ENCODE measurements at regions of chr15 and their contacts with region 1.

Region 1: DNA sequence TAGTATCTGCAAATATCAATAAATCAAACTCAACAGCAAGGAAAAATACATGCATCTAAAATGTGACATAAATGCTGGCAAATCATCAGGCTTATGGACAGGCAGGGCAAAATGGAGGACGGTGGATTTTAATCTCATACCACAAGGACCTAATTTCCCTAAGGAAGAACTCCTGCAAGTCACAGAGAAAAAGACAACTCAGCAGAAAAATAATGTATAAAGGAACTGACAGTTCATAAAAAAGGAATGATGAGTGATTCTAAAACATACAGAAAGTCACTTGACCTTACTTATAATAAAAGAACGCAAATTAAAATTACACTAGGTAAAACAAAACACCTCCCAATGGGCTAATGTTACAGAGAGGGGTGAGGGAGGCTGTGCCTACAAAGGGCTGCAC is 17.2 kb downstream of the TUBGCP5 start:
- DNase-seq: no peak
- H3K4me3 ChIP-seq: no peak overlapping the region
- H3K4me3 Mint-ChIP-seq: no peak overlapping the region
- H3K27ac ChIP-seq: no peak overlapping the region
- H3K27ac Mint-ChIP-seq: no peak overlapping the region
- H3K4me1 ChIP-seq: no peaks in the 10 kb centered on the region
- H3K4me1 Mint-ChIP-seq: no peaks in the 10 kb centered on the region
- H3K27me3 ChIP-seq: no peaks in the 10 kb centered on the region
- H3K27me3 Mint-ChIP-seq: no peaks in the 10 kb centered on the region

Region 2: GRCh38 chr15:23039151-23039916 is 17.2 kb after region 1 on chr15 and contains the start of gene TUBGCP5:
- CTCF ChIA-PET with region 1: interaction called, 22 read pairs
- POLR2A ChIA-PET with region 1: interaction called, 3 read pairs
- intact Hi-C with region 1: no loop called
- DNase-seq: peak; percentile 96 to 98 (median 97)
- H3K4me3 ChIP-seq: peak within 1 kb of the TSS; percentile 65 to 83
- H3K4me3 Mint-ChIP-seq: peak within 1 kb of the TSS; percentile 90 to 100 (median 96)
- H3K27ac ChIP-seq: peak within 1 kb of the TSS; percentile 23
- H3K27ac Mint-ChIP-seq: peak within 1 kb of the TSS; percentile 88 to 99 (median 91)
- H3K4me1 ChIP-seq: peaks cover 19% of the 10 kb centered on the region
- H3K4me1 Mint-ChIP-seq: peaks cover 11 to 35% (median 21%) of the 10 kb centered on the region in 4 donors
- H3K27me3 ChIP-seq: no peaks in the 10 kb centered on the region
- H3K27me3 Mint-ChIP-seq: peaks cover 0 to 1% of the 10 kb centered on the region in 2 donors
- total RNA-seq, gene TUBGCP5: 26.0 to 28.3 TPM

Region 3: GRCh38 chr15:23049984-23050628 is 27.9 kb after region 1 on chr15:
- CTCF ChIA-PET with region 1: no interaction called
- POLR2A ChIA-PET with region 1: no interaction called
- intact Hi-C with region 1: no loop called
- DNase-seq: no peak
- H3K4me3 ChIP-seq: no peak overlapping the region
- H3K4me3 Mint-ChIP-seq: no peak overlapping the region
- H3K27ac ChIP-seq: no peak overlapping the region
- H3K27ac Mint-ChIP-seq: peak overlapping the region in 1 of 7 donors; percentile 4
- H3K4me1 ChIP-seq: no peaks in the 10 kb centered on the region
- H3K4me1 Mint-ChIP-seq: peaks cover 0 to 5% (median 0%) of the 10 kb centered on the region in 4 donors
- H3K27me3 ChIP-seq: no peaks in the 10 kb centered on the region
- H3K27me3 Mint-ChIP-seq: peaks cover 3 to 4% of the 10 kb centered on the region in 2 donors

Region 4: GRCh38 chr15:23118203-23118602 is 96.0 kb after region 1 on chr15:
- CTCF ChIA-PET with region 1: no interaction called
- POLR2A ChIA-PET with region 1: no interaction called
- intact Hi-C with region 1: no loop called
- DNase-seq: no peak
- H3K4me3 ChIP-seq: no peak overlapping the region
- H3K4me3 Mint-ChIP-seq: no peak overlapping the region
- H3K27ac ChIP-seq: no peak overlapping the region
- H3K27ac Mint-ChIP-seq: no peak overlapping the region
- H3K4me1 ChIP-seq: no peaks in the 10 kb centered on the region
- H3K4me1 Mint-ChIP-seq: no peaks in the 10 kb centered on the region
- H3K27me3 ChIP-seq: no peaks in the 10 kb centered on the region
- H3K27me3 Mint-ChIP-seq: peaks cover 8 to 13% of the 10 kb centered on the region in 2 donors